ENCODE measurements at regions of chr10 and their contacts with region 1.

Region 1: GRCh38 chr10:101353692-101354327 is at the start of gene BTRC:
- DNase-seq: peak; percentile 97
- ATAC-seq: peak; percentile 98
- H3K4me3 Mint-ChIP-seq: peak within 1 kb of the TSS; percentile 91
- H3K27ac Mint-ChIP-seq: peak within 1 kb of the TSS; percentile 94
- H3K4me1 Mint-ChIP-seq: peaks cover 27% of the 10 kb centered on the region
- H3K27me3 Mint-ChIP-seq: peaks cover 12% of the 10 kb centered on the region
- total RNA-seq, gene BTRC: 15.5 to 18.7 TPM

Region 2: DNA sequence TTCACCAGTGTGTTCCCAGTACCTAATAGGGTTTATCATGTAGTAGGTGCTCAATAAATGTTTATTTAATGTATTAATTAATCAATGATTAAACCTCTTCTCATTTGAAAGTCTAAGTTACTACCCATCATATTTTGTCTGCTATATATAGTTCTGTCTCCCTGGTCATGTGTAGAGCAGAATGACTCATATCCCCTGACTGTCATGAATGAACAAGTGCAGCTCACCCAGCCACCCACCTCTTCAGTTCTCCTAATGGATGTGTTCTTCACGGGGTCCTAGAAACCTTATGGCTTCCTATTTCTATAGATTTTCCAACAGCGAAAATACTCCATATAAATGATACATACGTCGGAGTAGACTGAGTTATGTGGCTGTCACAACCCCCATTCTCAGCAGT is 753.6 kb before region 1 on chr10:
- CTCF ChIA-PET with region 1: no interaction called
- POLR2A ChIA-PET with region 1: no interaction called
- intact Hi-C with region 1: no loop called
- DNase-seq: no peak
- ATAC-seq: no peak
- H3K4me3 Mint-ChIP-seq: no peak overlapping the region
- H3K27ac Mint-ChIP-seq: no peak overlapping the region
- H3K4me1 Mint-ChIP-seq: no peaks in the 10 kb centered on the region
- H3K27me3 Mint-ChIP-seq: peaks cover 20% of the 10 kb centered on the region

Region 3: GRCh38 chr10:100912605-100913469 is 441.0 kb before region 1 on chr10 and contains the start of gene SLF2:
- CTCF ChIA-PET with region 1: no interaction called
- POLR2A ChIA-PET with region 1: no interaction called
- intact Hi-C with region 1: loop called in 1 of 2 experiments (anchors 2 kb)
- DNase-seq: peak; percentile 96
- ATAC-seq: peak; percentile 95
- H3K4me3 Mint-ChIP-seq: peak within 1 kb of the TSS; percentile 97
- H3K27ac Mint-ChIP-seq: peak within 1 kb of the TSS; percentile 98
- H3K4me1 Mint-ChIP-seq: peaks cover 45% of the 10 kb centered on the region
- H3K27me3 Mint-ChIP-seq: no peaks in the 10 kb centered on the region
- total RNA-seq, gene SLF2: 30.9 to 34.3 TPM

Region 4: DNA sequence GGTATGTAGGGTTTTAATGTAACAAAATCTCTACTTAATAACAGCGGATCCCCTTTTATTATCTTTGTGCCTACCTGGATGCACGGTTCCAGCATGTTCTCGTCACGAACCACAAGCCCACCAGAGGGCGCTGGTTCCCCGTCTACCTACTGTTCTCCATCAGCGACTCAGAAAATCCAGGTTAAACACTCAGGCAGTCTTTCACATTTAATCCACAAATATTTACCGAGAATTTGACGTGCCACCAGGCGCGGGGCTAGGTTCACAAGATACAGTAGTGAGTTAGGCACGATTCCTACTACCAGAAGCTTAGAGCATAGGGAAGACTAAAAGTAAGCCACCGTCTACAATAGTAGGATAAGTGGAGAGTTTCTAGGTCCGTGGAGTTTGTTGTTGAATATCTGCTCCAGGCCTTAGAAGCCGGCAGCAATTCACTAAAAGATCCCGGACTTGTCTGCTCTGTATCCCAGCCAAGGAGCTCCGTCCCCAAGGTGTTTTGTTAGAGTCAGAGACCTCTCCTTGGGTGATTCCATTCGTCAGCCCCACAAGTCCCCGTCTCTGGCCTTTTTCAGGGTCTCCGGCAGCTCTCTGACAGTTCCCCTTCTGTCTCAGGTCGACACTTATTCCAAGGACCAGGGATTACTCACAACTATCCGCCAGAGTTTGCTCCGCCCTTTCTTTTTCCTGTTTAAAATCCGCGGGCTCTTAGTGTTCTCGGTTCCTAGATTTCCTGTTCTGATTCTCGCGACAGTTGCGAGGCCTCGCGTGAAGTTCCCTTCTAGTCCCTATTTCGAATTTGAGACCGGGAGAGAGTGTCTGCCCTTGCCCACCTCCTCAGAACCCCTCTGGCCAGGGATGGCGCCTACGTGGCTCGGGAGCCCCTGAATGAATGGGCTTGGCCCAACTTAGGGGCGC is 293.5 kb before region 1 on chr10:
- CTCF ChIA-PET with region 1: no interaction called
- POLR2A ChIA-PET with region 1: no interaction called
- intact Hi-C with region 1: loop called in 1 of 2 experiments (anchors 1 kb)
- DNase-seq: peak; percentile 95
- ATAC-seq: peak; percentile 75
- H3K4me3 Mint-ChIP-seq: peak overlapping the region; percentile 82
- H3K27ac Mint-ChIP-seq: peak overlapping the region; percentile 96
- H3K4me1 Mint-ChIP-seq: peaks cover 22% of the 10 kb centered on the region
- H3K27me3 Mint-ChIP-seq: peaks cover 22% of the 10 kb centered on the region

Region 5: DNA sequence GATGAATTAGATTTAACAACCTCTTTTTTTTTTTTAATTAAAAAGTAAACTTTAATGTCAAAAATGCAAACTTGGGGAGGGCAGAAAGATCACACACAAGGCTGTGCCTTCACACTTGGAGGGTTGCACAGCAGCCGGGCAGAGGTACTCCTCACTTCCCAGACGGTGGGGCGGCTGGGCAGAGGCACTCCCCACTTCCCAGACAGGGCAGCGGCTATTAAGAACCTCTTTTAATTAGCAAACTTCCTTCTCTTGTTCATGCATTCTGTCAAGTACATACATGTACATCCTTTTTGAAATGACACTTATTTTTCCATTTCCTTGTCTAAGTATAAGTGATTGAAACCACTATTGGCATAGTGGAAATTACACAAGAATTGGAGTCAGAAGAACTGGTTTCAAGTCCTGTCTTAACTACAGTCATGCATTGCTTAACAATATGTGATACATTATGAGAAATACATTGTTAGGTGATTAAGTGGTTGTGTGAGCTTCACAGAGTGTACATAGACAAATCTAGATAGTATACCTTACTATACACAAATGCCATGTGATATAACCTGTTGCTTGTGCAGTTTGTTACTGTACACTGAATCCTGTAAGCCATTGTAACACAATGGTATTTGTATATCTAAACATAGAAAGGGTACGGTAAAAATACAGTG is 26.7 kb after region 1 on chr10:
- CTCF ChIA-PET with region 1: interaction called, 4 read pairs
- POLR2A ChIA-PET with region 1: no interaction called
- intact Hi-C with region 1: loop called (anchors 1 to 2 kb)
- DNase-seq: peak; percentile 9
- ATAC-seq: peak; percentile 97
- H3K4me3 Mint-ChIP-seq: no peak overlapping the region
- H3K27ac Mint-ChIP-seq: no peak overlapping the region
- H3K4me1 Mint-ChIP-seq: peaks cover 37% of the 10 kb centered on the region
- H3K27me3 Mint-ChIP-seq: no peaks in the 10 kb centered on the region

Region 6: GRCh38 chr10:101587725-101588653 is 234.2 kb after region 1 on chr10 and contains the starts of genes DPCD and POLL:
- CTCF ChIA-PET with region 1: no interaction called
- POLR2A ChIA-PET with region 1: no interaction called
- intact Hi-C with region 1: loop called in 1 of 2 experiments (anchors 1 kb)
- DNase-seq: peak; percentile 97
- ATAC-seq: peak; percentile 98
- H3K4me3 Mint-ChIP-seq: peak within 1 kb of the TSS; percentile 86
- H3K27ac Mint-ChIP-seq: peak within 1 kb of the TSS; percentile 81
- H3K4me1 Mint-ChIP-seq: peaks cover 18% of the 10 kb centered on the region
- H3K27me3 Mint-ChIP-seq: no peaks in the 10 kb centered on the region
- total RNA-seq, gene DPCD: 15.5 to 19.3 TPM
- total RNA-seq, gene POLL: 30.2 to 31.4 TPM

Region 7: GRCh38 chr10:101830322-101831168 is 476.7 kb after region 1 on chr10:
- CTCF ChIA-PET with region 1: no interaction called
- POLR2A ChIA-PET with region 1: no interaction called
- intact Hi-C with region 1: loop called in 1 of 2 experiments (anchors 5 kb)
- DNase-seq: peak; percentile 96
- ATAC-seq: peak; percentile 77
- H3K4me3 Mint-ChIP-seq: peak overlapping the region; percentile 70
- H3K27ac Mint-ChIP-seq: peak overlapping the region; percentile 98
- H3K4me1 Mint-ChIP-seq: peaks cover 56% of the 10 kb centered on the region
- H3K27me3 Mint-ChIP-seq: no peaks in the 10 kb centered on the region

Measured in activated CD4-positive, alpha-beta T cell treated with anti-CD3 and anti-CD28 coated beads for 36 hours (primary cell).